Activated CD8-positive, alpha-beta T cell treated with anti-CD3 and anti-CD28 coated beads, Interleukin-2, amount 10 ng/mL, durations not matched to agents 7 days and 5 days (primary cell): ENCODE measurements at regions of chr6 and their contacts with region 1.

Region 1: DNA sequence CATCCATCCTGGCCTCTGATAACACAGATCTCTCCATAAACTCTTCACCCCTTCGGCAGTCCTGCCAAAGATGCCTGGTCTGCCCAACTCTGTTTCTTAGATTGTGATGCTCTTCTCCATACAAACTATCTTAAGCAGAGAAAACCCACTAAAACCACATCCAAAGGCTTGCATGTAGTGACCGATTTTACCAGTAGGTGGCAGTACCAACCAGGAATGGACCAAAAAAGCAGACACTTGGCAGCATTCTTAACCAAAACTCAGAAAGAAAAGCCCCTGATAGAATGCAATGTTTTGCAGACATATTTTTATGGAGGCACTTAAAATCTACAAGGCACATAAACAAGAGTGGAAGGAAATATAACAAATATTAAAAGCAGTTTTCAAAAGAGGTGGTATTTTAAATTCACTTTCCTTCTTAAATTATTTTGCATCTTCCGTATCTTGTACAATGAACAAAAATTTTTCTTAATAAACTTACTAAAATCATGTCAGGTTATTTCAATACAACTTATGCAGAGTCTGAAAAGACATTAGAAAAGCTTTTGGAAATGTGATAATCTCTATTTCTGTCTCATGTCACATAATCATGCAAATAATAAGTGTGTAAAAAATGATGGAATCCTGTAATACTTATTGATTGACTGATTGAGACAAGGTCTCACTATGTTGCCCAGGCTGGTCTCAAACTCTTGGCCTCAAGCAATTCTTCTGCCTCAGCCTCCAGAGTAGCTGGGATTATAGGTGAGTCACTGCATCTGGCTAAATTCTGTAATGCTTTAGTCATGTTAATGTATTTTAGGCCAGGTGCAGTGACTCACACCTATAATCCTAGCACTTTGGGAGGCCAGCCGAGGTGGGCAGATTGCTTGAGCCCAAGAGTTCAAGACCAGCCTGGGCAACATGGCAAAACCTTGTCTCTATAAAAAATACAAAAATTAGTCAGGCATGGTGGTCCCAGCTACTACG is 29.4 kb downstream of the LRP11 start:
- DNase-seq: peak; percentile 84
- ATAC-seq: peak; percentile 64
- H3K4me3 Mint-ChIP-seq: no peak overlapping the region
- H3K27ac Mint-ChIP-seq: no peak overlapping the region
- H3K4me1 Mint-ChIP-seq: peaks cover 2% of the 10 kb centered on the region
- H3K27me3 Mint-ChIP-seq: peaks cover 5% of the 10 kb centered on the region

Region 2: DNA sequence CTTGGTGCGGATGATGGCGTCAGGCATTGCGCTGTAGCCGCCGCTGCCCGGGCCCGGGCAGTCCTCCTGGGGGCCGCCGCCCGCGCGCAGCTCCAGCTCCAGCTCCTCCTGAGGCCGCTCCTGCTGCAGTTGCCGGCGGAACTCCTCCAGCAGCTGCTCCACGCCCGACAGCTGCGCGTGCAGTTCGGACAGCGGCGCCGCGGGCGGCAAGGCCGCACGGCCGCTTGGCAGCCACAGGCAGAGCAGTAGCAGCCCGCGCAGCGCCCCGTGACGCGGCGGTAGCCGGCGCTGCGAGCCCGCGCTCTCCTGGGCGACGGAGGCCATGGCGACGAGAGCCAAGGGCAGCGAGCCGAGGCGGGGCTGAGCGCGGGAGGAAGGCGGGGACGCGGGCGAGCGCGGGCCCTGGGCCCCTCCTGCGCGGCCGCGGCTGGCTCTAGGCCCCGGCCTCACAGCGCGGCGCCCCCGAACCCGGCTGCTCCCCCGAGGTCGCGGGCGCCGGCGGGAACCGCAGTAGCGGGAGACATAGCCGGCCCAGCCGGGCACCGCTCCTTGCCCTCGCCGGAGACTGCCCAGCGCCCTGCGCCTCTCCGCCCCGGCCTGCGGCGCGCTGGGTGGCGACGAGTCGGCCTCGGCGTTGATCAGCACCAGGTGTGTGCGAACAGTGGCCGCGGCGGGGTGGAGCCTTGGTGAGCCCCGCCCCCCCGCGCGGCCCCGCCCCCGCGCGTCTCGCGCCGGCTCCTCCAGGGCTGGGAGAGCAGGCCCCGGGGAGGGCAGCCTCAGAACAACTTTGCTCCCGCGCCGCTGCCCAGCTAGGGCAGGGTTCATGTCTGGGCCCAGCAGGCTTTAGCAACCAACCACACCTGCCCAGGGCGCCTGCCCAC is 29.1 kb after region 1 on chr6 and contains the start of gene LRP11:
- CTCF ChIA-PET with region 1: interaction called, 18 read pairs
- POLR2A ChIA-PET with region 1: no interaction called
- DNase-seq: peak; percentile 83
- ATAC-seq: peak; percentile 91
- H3K4me3 Mint-ChIP-seq: peak within 1 kb of the TSS; percentile 81
- H3K27ac Mint-ChIP-seq: peak within 1 kb of the TSS; percentile 7
- H3K4me1 Mint-ChIP-seq: peaks cover 11% of the 10 kb centered on the region
- H3K27me3 Mint-ChIP-seq: peaks cover 27% of the 10 kb centered on the region
- total RNA-seq, gene LRP11: 1.4 to 2.2 TPM